ENCODE measurements at regions of chr15 and their contacts with region 1.

Region 1: DNA sequence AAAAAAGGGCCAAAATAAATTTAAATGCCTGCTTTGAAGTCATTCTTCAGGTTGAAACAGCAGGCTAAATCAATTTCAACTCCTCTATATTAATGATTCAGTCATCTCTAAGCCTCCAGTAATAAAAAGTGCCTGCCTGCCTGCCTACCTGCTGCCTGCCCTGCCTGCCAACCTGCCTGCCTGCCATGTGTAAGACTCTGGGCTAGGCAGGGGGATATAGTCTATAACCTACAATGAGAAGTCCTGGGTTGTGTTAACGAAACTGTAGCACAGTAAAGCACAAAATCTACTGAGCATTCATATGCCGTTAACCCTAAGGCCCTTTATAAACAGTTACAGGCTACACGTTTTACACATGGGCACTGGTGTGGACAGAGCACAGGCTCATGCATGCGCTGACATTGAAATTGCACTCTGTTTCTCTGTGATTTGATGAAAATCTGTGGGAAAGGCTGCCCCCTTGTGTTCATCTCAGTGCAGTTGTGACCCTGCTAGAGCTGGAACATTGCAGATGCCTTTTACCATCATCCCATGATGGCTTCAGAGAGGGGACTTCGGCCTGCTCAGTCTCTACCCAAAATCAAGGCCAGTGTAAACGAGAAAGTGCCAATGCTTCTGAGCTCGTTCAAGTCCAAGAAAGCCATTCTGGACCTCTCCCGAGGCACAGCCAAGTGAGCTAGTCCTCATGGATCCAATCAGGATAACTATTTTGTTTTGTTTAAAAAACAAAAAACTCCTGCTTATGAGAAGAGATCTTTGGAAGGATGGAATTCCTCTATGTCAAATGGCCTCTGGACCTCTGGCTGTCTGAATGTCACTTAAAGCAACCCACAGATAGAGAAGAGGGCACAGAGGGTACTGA is 64.6 kb downstream of the EFL1 start:
- DNase-seq: no peak

Region 2: GRCh38 chr15:81407718-81408117 is 790.2 kb before region 1 on chr15:
- intact Hi-C with region 1: loop called (anchors 5 kb)
- DNase-seq: peak; percentile 78

Region 3: GRCh38 chr15:82046666-82047452 is 151.1 kb before region 1 on chr15:
- intact Hi-C with region 1: loop called (anchors 5 kb)
- DNase-seq: peak; percentile 94

Region 4: GRCh38 chr15:82108489-82109078 is 89.4 kb before region 1 on chr15:
- intact Hi-C with region 1: loop called (anchors 5 kb)
- DNase-seq: peak; percentile 82